Aorta (tissue), 5 donors: ENCODE measurements at regions of chr2 and their contacts with region 1.

Region 1: DNA sequence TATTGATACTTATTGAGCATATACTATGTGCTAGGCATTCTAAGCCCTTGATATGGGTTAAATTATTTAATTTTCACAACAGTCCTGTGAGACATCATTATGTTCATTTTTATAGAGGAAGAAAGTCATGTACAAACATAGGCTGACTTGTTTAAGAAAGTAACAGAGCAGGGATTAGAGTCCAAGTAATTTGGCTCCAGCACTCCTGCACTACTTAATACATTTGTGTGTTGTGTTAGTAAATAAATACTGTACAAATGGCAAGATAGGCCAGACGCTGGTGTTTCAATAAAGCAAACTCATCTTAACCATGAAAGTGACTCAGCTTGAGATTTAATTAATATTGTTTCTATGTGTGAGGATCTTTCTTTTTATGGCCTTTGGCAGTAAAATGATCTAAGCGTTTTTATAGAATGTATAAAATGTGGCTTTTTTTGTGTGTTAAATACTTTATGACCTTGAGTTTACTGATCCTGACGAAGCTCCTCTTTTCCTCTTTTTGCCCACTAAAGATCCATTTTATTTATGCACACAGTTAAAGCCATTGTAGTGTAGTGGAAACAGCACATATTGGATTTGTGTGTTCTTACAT is 21.3 kb downstream of the NBEAL1 start:
- DNase-seq: no peak
- ATAC-seq: no peak
- H3K4me3 ChIP-seq: peak overlapping the region in 1 of 2 donors; percentile 18
- H3K27ac ChIP-seq: peak overlapping the region in 1 of 2 donors; percentile 95
- H3K4me1 ChIP-seq: peaks cover 1 to 5% of the 10 kb centered on the region in 2 donors
- H3K27me3 ChIP-seq: no peaks in the 10 kb centered on the region

Region 2: GRCh38 chr2:203021991-203022390 is 14.0 kb before region 1 on chr2:
- intact Hi-C with region 1: loop called in 1 of 2 experiments (anchors 2 kb)
- DNase-seq: no peak
- ATAC-seq: peak; percentile 40
- H3K4me3 ChIP-seq: no peak overlapping the region
- H3K27ac ChIP-seq: peak overlapping the region; percentile 38 to 57
- H3K4me1 ChIP-seq: peaks cover 2 to 4% of the 10 kb centered on the region in 2 donors
- H3K27me3 ChIP-seq: no peaks in the 10 kb centered on the region